ENCODE measurements at regions of chr3 and their contacts with region 1.

Region 1: GRCh38 chr3:45043728-45044299 is 17.7 kb downstream of the CLEC3B start:
- DNase-seq: no peak
- H3K4me3 ChIP-seq: no peak overlapping the region
- H3K27ac ChIP-seq: peak overlapping the region; percentile 6
- H3K4me1 ChIP-seq: no peaks in the 10 kb centered on the region
- H3K27me3 ChIP-seq: no peaks in the 10 kb centered on the region
- CTCF ChIP-seq: no peak

Region 2: DNA sequence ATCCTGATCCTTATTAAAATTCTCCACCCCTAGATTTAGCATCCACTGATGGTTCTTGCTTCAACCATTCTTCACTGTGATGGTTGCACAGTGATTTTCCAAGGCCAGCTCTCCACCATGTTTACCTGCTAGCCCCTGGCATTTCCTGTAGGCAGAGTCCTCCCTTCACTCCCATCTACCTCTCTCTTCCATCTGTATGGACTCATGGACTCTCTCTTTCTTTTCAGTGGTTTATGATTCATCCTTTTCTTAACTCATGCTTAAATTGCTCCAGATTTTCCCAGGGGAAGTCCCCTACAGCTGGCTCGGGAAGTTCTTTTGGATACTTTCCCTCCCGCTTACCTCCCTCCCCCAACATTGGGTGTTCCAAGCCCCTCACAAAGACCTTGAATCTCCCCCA is 150.7 kb before region 1 on chr3:
- intact Hi-C with region 1: no loop called
- DNase-seq: no peak
- H3K4me3 ChIP-seq: no peak overlapping the region
- H3K27ac ChIP-seq: no peak overlapping the region
- H3K4me1 ChIP-seq: no peaks in the 10 kb centered on the region
- H3K27me3 ChIP-seq: peaks cover 18% of the 10 kb centered on the region
- CTCF ChIP-seq: no peak

Region 3: DNA sequence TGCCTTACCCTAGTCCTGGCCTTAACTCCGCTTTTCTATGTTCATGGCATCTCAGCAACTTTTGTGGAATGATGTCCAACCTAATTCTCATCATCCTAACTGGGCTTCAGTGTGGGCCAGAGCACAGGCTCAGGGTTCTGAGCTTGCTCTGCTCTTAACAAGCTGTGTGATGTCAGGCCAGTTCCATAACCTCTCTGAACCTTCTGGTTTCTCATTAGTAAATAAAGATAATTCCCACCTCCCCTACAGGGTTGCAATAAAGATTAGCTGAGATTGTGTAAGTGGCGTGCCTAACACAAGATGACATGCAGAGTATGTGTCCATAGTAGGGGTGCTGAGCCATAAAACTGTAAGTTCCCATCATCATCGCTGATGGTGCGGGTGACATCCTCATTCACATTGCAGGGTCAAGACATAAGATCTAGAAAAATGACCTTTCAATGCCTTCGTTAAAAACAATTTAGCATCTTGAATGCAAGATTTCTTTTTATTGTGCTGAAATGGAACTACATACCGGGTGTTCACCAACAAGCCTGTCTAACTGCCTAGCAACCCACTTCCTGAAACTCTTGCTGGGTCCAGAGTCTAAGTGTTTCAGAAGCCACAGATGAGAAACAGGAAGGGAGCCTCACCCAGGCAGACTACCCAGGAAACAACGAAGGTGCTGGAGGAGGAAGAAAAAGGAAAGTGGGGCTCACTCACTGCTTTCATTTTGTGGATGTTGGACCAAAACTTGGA is 66.1 kb after region 1 on chr3:
- intact Hi-C with region 1: no loop called
- DNase-seq: no peak
- H3K4me3 ChIP-seq: no peak overlapping the region
- H3K27ac ChIP-seq: no peak overlapping the region
- H3K4me1 ChIP-seq: peaks cover 23% of the 10 kb centered on the region
- H3K27me3 ChIP-seq: no peaks in the 10 kb centered on the region
- CTCF ChIP-seq: no peak

Region 4: DNA sequence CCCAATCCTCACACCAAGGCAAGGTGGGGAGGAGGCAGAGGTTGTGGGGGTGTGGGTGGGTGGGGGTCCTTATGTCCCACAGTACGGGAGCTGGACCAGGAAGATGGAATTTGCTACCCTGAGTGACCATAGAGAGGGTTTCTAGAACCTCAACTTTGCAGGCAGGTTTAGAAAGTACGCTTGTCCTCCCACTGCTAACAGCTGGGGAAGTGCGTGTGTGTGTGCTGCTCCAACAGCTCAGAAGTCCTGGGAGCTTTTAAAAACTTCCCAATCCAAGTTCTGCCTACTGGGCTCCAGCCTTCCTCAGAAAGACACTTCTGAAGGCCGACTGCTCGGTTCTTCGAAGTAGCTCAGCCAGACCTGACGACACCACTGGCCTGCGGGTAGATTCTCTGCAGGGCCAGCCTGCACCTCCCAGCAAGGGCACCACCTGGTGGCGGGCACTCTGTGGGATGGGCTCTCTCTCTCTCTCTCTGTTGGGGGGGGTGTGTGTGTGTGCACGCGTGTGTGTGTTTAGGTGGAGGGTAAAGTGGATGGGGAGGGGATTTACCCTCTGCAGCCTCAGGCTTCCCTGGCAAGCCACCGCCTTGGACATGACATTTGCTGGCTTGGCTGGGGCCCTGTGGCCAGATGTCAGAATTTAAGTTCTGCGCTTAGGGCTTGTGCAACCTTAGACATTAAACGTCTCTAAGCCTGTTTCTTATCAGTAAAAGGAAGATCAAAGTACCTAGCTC is 166.7 kb after region 1 on chr3:
- intact Hi-C with region 1: loop called (anchors 2 kb)
- DNase-seq: peak; percentile 82
- H3K4me3 ChIP-seq: no peak overlapping the region
- H3K27ac ChIP-seq: no peak overlapping the region
- H3K4me1 ChIP-seq: peaks cover 9% of the 10 kb centered on the region
- H3K27me3 ChIP-seq: peaks cover 26% of the 10 kb centered on the region
- CTCF ChIP-seq: peak; percentile 77

Region 5: DNA sequence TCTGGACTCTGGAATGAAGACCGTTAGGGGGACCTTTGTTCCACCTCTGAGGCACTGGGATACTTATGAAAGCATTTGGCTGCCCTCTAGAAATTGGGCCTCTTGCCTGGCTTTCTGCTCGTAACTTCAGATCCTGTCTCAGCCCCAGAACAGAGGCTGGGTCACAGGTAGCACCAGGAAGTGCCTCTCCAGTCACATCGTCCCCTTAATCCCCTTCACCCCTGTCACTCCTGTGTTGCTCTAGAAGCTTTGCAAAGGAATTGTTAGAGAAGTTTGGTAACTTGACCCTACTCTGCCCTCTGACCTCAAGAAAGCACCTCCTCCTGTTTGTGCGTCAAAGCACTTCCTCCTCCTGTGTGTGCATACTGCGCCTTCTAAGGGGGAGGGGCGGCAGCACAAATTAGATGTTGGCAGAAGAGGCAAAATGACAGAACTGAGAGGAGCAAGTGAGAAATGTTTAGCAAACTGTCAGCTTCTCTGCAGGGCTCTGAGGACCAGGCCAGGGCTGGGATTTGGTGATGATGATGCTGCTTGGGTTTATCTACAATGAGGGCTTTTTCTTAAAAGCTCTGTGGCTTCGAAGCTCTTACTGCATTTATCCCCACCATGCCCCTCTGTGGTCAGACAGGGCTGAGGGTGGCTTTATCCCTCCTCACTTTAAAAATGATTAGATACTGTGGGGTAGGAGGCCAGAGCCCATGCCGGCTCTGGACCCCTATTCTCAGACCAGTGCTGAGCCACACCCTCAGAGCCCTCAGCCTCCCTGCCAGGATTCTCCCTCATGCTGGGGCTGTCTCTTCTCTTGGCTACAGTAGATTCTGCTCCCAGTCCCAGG is 420.7 kb after region 1 on chr3:
- intact Hi-C with region 1: no loop called
- DNase-seq: no peak
- H3K4me3 ChIP-seq: no peak overlapping the region
- H3K27ac ChIP-seq: no peak overlapping the region
- H3K4me1 ChIP-seq: no peaks in the 10 kb centered on the region
- H3K27me3 ChIP-seq: no peaks in the 10 kb centered on the region
- CTCF ChIP-seq: no peak

Region 6: GRCh38 chr3:45507820-45508317 is 464.1 kb after region 1 on chr3:
- intact Hi-C with region 1: loop called (anchors 10 kb)
- DNase-seq: peak; percentile 32
- H3K4me3 ChIP-seq: no peak overlapping the region
- H3K27ac ChIP-seq: peak overlapping the region; percentile 55
- H3K4me1 ChIP-seq: peaks cover 21% of the 10 kb centered on the region
- H3K27me3 ChIP-seq: no peaks in the 10 kb centered on the region
- CTCF ChIP-seq: peak; percentile 57

Measured in left ventricle myocardium inferior (tissue), 1 donor.